Right ventricle myocardium superior (tissue), 1 donor: ENCODE measurements at regions of chr12 and their contacts with region 1.

Region 1: DNA sequence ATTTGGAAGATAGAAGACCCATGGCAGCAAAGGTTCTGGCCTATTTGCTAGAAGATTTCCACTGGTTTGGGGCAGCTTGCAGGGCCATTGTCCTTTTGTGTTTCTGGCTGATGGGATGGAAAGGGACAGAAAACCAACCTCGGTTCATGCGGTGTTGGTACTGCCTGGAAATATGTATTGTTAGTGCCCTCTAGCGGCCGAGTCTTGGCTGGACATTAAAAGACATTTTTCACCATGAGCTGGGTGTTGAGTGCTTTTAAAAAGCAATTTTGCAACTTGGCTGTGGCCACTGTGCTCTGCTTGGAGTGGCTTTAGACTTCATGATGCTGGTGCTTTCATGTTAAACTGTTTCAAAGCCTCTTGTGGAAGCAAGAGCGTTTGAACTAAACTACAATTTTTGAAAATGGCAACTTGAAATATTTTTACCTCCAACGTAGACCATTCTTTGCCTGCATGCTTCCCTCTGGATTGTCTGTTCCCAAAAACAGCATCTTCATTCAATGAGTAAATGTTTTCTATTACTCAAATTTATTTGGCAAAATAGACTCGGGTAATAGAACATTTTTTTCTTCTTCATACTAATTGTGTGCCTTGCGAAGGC is 102.7 kb upstream of the TBX5 start:
- DNase-seq: peak; percentile 60
- ATAC-seq: peak; percentile 82

Region 2: GRCh38 chr12:113980537-113981337 is 527.9 kb before region 1 on chr12:
- intact Hi-C with region 1: loop called (anchors 5 kb)
- DNase-seq: no peak
- ATAC-seq: peak; percentile 55

Region 3: GRCh38 chr12:114166362-114166761 is 342.3 kb before region 1 on chr12:
- intact Hi-C with region 1: loop called (anchors 10 kb)
- DNase-seq: no peak
- ATAC-seq: peak; percentile 82

Region 4: DNA sequence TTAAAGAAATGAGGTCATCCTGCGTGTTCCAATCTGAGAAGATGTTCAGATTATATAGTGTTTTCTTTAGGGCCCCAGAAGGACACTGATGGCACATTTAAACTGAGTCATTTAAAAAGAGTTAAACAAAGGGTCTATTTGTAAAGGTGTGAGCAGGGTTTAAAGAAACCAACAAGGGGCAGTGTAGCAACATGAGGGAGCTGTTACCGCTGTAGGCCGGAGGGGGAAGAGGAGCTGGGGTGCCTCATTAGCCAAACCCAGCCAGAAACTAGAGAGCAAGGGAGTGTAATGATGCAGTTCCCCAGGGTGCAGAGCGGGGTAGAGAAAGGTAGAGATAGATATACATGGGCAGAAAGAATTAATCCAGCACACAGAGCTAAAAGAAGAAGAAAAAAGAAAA is 263.1 kb before region 1 on chr12:
- intact Hi-C with region 1: loop called (anchors 10 kb)
- DNase-seq: no peak
- ATAC-seq: peak; percentile 77